AG04449 (cell line): ENCODE measurements at regions of chr14 and their contacts with region 1.

Region 1: DNA sequence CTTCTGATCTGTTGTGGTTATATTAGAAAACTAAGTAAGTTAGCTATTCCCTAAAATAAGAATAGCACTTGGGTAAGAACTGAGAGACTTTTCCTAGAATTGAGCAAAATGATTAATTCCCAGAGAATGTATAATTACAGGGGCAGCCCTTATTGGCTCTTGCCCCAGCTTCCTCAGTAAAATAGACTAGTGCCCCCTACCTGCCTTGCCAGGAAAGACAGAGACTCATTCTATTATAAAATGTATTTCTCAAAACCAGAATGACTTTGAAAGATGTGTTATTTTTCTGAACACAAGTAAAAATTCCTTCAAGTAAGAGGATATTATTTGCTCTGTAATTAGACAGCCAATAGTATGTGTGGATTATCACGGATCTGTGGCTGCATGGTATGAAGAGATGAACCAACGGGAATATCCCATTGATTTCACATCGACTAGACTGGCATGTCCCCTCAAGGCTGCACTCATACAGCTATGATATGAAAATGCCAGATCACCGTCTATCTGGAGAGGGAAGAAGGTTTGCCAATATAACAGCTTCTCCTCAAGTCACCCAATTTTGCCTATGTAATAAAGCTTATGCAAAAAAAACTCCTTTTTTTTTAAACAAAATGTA is 7.4 kb upstream of the GLRX5 start:
- DNase-seq: no peak
- H3K4me3 ChIP-seq: no peak overlapping the region
- CTCF ChIP-seq: peak; percentile 64

Region 2: DNA sequence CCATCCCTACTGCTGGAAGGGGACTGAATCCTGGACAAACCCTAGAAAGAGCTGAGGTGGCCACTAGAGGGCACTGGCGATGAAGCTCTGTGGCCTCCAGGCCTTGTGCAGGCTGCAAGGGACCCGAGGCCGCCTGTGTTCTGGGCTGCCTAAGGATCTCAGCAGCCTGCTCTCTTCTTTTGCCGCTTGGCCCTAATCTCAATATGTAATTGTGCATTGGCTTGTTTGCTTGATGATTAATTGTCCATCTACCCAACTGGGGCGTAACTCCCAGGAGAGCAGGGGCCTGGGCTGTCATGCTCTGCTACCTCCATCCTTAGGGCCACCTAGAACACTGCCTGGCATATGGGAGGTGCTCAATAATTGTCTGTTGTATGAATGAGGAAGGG is 84.9 kb before region 1 on chr14:
- CTCF ChIA-PET with region 1: interaction called, 201 read pairs
- POLR2A ChIA-PET with region 1: interaction called, 3 read pairs
- DNase-seq: no peak
- H3K4me3 ChIP-seq: no peak overlapping the region
- CTCF ChIP-seq: peak; percentile 93

Region 3: DNA sequence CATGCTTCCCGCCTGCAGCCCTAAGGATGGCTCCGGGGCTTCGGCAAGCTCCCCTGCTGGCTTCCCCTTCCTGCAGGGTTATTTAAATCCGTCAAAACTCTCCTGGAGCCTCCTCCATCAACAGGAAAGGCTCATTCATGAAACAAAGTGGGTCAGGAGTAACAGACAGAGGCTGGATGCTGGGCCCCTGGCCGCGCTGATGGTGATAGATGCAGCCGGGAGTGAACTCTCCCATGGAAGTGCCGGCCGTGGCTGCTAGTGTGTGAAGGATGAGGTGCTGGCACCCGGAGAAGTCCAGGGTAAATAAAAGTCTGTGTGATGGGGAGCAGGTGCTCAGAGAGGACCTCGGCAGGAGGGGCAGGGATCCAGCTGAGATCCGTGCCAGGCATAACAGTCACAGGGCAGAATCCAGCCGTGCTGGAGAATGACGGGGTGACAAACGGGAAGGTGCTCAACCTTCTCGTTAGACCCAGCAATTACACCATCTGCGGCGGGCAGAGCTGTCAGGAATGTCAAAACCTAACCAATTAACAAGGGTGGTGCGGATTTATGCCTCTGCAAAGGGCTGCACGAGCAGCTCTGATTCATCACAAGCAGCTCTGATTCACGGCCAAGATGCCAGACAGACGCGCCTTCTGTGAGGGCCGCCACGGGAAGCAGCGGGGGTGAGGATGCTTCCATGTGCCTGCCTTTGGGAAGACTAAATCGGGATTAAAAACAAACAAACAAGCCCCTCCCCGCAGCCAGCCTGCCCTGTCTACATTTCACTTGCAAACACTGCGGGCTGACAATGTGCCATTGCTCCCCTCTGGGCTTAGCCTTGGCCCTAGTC is 66.6 kb before region 1 on chr14:
- CTCF ChIA-PET with region 1: interaction called, 38 read pairs
- POLR2A ChIA-PET with region 1: interaction called, 6 read pairs
- DNase-seq: peak; percentile 52
- H3K4me3 ChIP-seq: no peak overlapping the region; the same call in 1 of the 2 replicates
- CTCF ChIP-seq: no peak

Region 4: DNA sequence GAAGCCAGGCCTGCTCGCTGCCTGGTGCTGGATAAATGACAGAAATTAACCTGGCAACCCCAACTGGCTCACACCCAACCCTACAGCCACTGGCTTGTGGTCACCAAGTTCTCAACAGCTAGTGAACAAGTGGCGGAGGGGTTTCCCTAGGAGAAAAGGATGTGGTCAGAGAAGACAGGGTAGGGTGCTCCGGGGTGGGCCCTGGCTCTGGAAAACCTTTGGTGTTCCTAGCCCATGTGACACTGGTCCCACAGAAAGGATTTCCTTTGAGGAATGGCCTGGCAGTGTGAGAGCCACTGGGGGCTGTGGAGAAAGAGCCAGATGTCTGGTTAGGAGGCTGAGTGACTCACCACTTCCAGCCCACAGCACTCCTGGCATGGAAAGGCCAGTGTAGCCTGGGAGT is 19.8 kb before region 1 on chr14:
- CTCF ChIA-PET with region 1: interaction called, 62 read pairs
- POLR2A ChIA-PET with region 1: interaction called, 7 read pairs
- DNase-seq: no peak
- H3K4me3 ChIP-seq: no peak overlapping the region
- CTCF ChIP-seq: no peak

Region 5: GRCh38 chr14:95545179-95546168 is 18.0 kb after region 1 on chr14:
- CTCF ChIA-PET with region 1: interaction called, 18 read pairs
- POLR2A ChIA-PET with region 1: no interaction called
- DNase-seq: peak; percentile 71
- H3K4me3 ChIP-seq: no peak overlapping the region
- CTCF ChIP-seq: no peak

Region 6: GRCh38 chr14:95635060-95635459 is 107.6 kb after region 1 on chr14:
- CTCF ChIA-PET with region 1: no interaction called
- POLR2A ChIA-PET with region 1: no interaction called
- DNase-seq: no peak
- H3K4me3 ChIP-seq: no peak overlapping the region
- CTCF ChIP-seq: no peak